Activated naive CD4-positive, alpha-beta T cell treated with anti-CD3 and anti-CD28 coated beads for 36 hours (primary cell): ENCODE measurements at regions of chr1 and their contacts with region 1.

Region 1: GRCh38 chr1:197775282-197776262 is at the start of gene DENND1B:
- DNase-seq: peak; percentile 84
- H3K4me3 Mint-ChIP-seq: peak within 1 kb of the TSS; percentile 74
- H3K27ac Mint-ChIP-seq: peak within 1 kb of the TSS; percentile 99
- H3K4me1 Mint-ChIP-seq: peaks cover 64% of the 10 kb centered on the region
- H3K27me3 Mint-ChIP-seq: no peaks in the 10 kb centered on the region
- total RNA-seq, gene DENND1B: 8.9 to 9.7 TPM

Region 2: DNA sequence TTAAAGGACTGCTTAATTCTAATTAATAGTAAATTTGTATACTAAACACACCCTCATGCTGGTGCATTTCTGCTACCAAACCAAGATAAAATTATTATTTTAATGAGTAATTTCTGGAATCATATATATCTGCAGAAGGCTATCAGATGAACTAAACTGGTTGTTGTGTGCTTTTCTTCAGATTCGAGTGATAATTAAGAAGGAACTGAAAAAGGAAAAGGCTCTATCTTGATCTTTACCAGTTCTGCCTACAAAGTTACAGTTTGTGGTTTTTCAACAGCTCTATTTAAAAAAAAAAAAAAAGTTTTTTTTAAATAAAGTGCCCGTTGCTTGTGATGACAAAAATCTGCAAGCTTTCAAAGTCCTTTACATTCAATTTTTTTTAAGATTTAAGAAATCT is 14.0 kb before region 1 on chr1:
- CTCF ChIA-PET with region 1: interaction called, 4 read pairs
- intact Hi-C with region 1: loop called (anchors 1 kb)
- DNase-seq: no peak
- H3K4me3 Mint-ChIP-seq: no peak overlapping the region
- H3K27ac Mint-ChIP-seq: no peak overlapping the region
- H3K4me1 Mint-ChIP-seq: peaks cover 34% of the 10 kb centered on the region
- H3K27me3 Mint-ChIP-seq: no peaks in the 10 kb centered on the region

Region 3: GRCh38 chr1:197915862-197916499 is 140.4 kb after region 1 on chr1:
- CTCF ChIA-PET with region 1: no interaction called
- intact Hi-C with region 1: loop called (anchors 2 kb)
- DNase-seq: no peak
- H3K4me3 Mint-ChIP-seq: peak overlapping the region; percentile 55
- H3K27ac Mint-ChIP-seq: no peak overlapping the region
- H3K4me1 Mint-ChIP-seq: peaks cover 77% of the 10 kb centered on the region
- H3K27me3 Mint-ChIP-seq: peaks cover 94% of the 10 kb centered on the region

Region 4: GRCh38 chr1:197948926-197949899 is 173.6 kb after region 1 on chr1:
- CTCF ChIA-PET with region 1: no interaction called
- intact Hi-C with region 1: no loop called
- DNase-seq: peak; percentile 45
- H3K4me3 Mint-ChIP-seq: peak overlapping the region; percentile 10
- H3K27ac Mint-ChIP-seq: peak overlapping the region; percentile 69
- H3K4me1 Mint-ChIP-seq: peaks cover 21% of the 10 kb centered on the region
- H3K27me3 Mint-ChIP-seq: no peaks in the 10 kb centered on the region

Region 5: DNA sequence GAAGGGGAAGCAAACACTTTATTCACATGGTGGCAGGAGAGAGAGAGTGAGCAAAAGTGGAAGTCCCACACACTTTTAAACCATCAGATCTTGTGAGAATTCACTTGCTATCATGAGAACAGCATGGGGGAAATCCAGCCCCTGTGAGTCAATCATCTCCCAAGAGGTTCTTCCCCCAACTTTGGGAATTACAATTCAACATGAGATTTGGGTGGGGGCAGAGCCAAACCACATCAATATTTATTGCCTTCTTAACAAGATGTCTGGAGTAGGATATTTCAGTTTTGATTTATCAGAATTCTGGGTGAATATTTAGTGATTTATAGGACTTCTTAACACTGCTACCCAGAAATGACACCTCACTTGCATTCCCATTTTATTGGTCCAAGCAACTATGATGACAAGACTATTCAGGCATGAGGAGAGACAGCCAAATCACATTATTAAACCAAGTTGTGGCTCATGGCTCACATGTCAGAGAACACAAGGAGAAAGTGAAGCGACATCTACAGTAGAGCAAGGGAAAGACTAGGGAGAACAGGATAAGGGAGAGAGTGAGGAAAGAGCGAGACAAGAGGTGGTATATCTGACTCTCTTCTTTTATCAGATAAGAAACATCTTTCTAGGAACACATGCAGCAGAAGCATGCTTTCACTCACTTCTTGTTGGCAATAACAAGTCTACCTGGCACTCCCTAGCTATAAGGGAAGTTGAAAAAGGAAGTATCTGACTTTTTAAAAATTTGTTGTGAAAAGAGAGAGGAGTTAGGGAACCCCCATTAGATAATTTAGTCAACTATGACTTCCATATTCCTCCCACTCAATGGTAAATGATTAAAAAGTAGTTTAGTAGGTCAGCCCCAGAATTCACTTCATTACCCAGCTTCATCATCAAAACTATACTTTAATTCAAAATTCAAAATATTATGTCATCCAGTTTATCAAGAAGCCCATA is 826.6 kb after region 1 on chr1:
- CTCF ChIA-PET with region 1: no interaction called
- intact Hi-C with region 1: loop called (anchors 1 kb)
- DNase-seq: peak; percentile 87
- H3K4me3 Mint-ChIP-seq: peak overlapping the region; percentile 51
- H3K27ac Mint-ChIP-seq: peak overlapping the region; percentile 85
- H3K4me1 Mint-ChIP-seq: peaks cover 87% of the 10 kb centered on the region
- H3K27me3 Mint-ChIP-seq: no peaks in the 10 kb centered on the region

Region 6: DNA sequence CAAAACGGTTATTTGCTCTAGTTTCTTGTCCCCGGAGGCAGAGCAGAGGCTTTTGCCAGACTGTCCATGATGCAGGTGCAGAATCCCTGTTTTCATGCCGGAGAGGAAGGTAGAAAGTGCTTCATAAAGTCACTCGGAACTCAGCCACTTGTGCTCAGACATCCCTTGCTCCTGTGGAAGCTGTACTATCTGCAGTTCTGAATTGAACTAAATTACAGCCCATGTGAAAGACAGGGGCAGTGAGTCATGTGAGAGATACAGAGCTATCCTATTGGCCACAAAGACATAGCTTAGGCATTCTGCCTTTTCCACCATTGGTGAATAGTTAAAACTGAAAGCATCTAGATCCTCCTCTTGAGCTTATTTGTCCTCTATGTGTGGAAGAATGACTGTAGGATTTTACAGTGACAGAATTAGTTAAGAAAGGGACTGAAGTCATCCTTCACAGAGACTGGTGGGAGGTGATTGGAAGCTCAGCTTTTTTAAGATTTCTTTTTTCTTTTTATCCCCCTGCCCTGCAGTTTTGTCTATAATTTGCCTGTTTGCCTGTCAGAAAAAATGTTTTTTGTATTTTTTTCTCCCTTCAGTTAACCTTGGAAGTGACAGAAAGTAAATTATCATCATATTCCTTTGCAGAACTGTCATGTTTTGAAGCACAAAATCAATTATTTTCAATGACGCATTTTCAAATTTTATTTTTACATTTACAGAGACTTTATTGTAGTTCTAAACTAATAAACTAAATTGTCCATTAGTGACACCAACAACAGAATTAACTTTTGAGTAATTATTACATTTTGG is 1161.9 kb after region 1 on chr1:
- CTCF ChIA-PET with region 1: no interaction called
- intact Hi-C with region 1: loop called (anchors 5 kb)
- DNase-seq: peak; percentile 72
- H3K4me3 Mint-ChIP-seq: peak overlapping the region; percentile 89
- H3K27ac Mint-ChIP-seq: peak overlapping the region; percentile 84
- H3K4me1 Mint-ChIP-seq: peaks cover 21% of the 10 kb centered on the region
- H3K27me3 Mint-ChIP-seq: no peaks in the 10 kb centered on the region